CD14-positive monocyte (primary cell): ENCODE measurements at regions of chr6 and their contacts with region 1.

Region 1: DNA sequence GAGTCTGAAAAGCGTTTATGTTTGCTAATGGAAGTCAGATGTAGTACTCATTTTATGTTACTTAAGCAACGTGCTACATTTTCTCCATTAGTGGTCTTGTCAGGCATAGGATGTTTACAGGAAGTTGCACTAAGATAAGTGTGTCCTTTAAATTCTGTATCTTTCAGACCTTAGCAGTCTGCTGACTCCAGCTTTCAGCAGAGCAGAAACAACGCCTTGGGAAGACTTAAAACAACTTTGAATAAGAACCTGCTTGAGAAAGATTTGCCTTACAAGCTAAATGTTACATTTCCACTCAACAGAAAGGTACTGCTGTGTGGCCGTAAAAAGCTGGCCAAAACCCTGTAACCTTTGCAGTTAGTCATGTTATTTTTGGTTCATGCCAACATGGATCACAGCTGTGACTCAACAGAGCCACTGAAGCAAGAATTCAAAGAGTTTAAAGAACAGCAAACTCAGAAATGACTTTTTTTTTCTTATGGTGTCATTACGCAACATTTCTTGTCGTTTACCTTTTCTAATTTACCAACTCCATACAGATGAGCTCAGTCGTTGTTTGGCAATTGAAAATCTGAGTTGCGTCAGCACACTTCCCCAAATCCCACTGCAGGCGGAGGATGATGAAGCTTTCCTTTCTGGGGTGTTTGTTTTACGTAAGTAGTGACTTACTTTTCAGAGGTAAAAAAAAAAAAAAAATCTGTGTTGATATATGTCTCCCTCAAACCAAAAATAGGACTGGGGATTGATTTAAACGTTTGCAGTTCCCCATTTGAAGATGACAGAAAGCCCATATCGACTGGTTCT is 27.9 kb upstream of the BMP6 start:
- DNase-seq: peak; percentile 96 to 99 (median 99)
- H3K4me3 ChIP-seq: peak overlapping the region in 2 of 3 experiments; percentile 19 to 45
- H3K4me3 Mint-ChIP-seq: peak overlapping the region; percentile 18 to 53
- H3K27ac ChIP-seq: peak overlapping the region; percentile 47 to 84
- H3K27ac Mint-ChIP-seq: peak overlapping the region; percentile 87 to 94 (median 91)
- H3K4me1 ChIP-seq: peaks cover 13 to 20% of the 10 kb centered on the region in 2 donors
- H3K4me1 Mint-ChIP-seq: peaks cover 26% of the 10 kb centered on the region
- H3K27me3 ChIP-seq: no peaks in the 10 kb centered on the region
- H3K27me3 Mint-ChIP-seq: no peaks in the 10 kb centered on the region
- CTCF ChIP-seq: no peak

Region 2: GRCh38 chr6:6712258-6712999 is 985.6 kb before region 1 on chr6:
- intact Hi-C with region 1: loop called in 1 of 2 experiments (anchors 5 kb)
- DNase-seq: peak; percentile 78 to 91 (median 86)
- H3K4me3 ChIP-seq: peak overlapping the region in 1 of 3 experiments; percentile 45
- H3K4me3 Mint-ChIP-seq: peak overlapping the region; percentile 65 to 72
- H3K27ac ChIP-seq: peak overlapping the region; percentile 82 to 97
- H3K27ac Mint-ChIP-seq: peak overlapping the region; percentile 88 to 96 (median 95)
- H3K4me1 ChIP-seq: peaks cover 75 to 83% of the 10 kb centered on the region in 2 donors
- H3K4me1 Mint-ChIP-seq: peaks cover 91% of the 10 kb centered on the region
- H3K27me3 ChIP-seq: no peaks in the 10 kb centered on the region
- H3K27me3 Mint-ChIP-seq: no peaks in the 10 kb centered on the region
- CTCF ChIP-seq: no peak